Aorta (tissue), 5 donors: ENCODE measurements at regions of chr16 and their contacts with region 1.

Region 1: DNA sequence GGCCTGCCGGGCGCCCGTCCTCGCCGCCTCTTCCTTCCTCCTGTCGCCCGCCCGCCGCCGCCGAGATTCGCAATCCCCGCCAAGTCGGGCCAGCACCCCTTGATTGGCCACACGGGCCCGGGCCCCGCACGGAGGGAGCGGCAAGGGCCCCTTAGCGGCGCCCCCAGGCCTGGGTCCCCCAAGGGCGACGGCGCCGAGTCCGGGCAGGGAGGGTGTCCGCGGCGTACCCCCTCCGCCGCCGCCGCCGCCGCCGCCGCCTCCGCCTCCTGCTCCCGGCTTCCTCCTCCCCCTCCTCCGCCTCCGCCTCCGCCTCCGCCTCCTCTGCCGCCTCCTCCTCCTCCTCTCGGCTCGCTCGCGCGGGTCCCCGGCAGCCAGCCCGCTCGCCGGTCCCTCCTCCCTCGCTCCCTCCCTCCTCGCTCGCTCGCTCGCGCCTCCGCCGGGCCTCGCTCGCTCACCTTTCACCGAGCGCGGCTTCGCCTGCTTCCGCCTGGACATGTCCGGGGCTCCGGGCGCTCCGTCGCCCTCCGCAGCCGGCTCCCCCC is 561 bp downstream of the ZNF423 start:
- DNase-seq: peak; percentile 92 to 95
- ATAC-seq: peak; percentile 84
- H3K4me3 ChIP-seq: peak overlapping the region; percentile 87 to 92
- H3K27ac ChIP-seq: peak overlapping the region; percentile 30 to 71
- H3K4me1 ChIP-seq: no peaks in the 10 kb centered on the region
- H3K27me3 ChIP-seq: no peaks in the 10 kb centered on the region

Region 2: GRCh38 chr16:49484451-49484849 is 370.9 kb before region 1 on chr16:
- intact Hi-C with region 1: loop called (anchors 5 to 10 kb)
- DNase-seq: peak; percentile 70 to 88
- ATAC-seq: peak; percentile 95
- H3K4me3 ChIP-seq: no peak overlapping the region
- H3K27ac ChIP-seq: no peak overlapping the region
- H3K4me1 ChIP-seq: no peaks in the 10 kb centered on the region
- H3K27me3 ChIP-seq: no peaks in the 10 kb centered on the region

Region 3: GRCh38 chr16:49620158-49620868 is 235.0 kb before region 1 on chr16:
- intact Hi-C with region 1: loop called (anchors 10 kb)
- DNase-seq: peak; percentile 91 to 95
- ATAC-seq: peak; percentile 86
- H3K4me3 ChIP-seq: no peak overlapping the region
- H3K27ac ChIP-seq: peak overlapping the region; percentile 68 to 86
- H3K4me1 ChIP-seq: peaks cover 0 to 5% of the 10 kb centered on the region in 2 donors
- H3K27me3 ChIP-seq: no peaks in the 10 kb centered on the region

Region 4: GRCh38 chr16:49701789-49702494 is 153.4 kb before region 1 on chr16:
- intact Hi-C with region 1: loop called (anchors 5 kb)
- DNase-seq: peak; percentile 73 to 86
- ATAC-seq: peak; percentile 63
- H3K4me3 ChIP-seq: no peak overlapping the region
- H3K27ac ChIP-seq: no peak overlapping the region
- H3K4me1 ChIP-seq: peaks cover 0 to 3% of the 10 kb centered on the region in 2 donors
- H3K27me3 ChIP-seq: no peaks in the 10 kb centered on the region

Region 5: DNA sequence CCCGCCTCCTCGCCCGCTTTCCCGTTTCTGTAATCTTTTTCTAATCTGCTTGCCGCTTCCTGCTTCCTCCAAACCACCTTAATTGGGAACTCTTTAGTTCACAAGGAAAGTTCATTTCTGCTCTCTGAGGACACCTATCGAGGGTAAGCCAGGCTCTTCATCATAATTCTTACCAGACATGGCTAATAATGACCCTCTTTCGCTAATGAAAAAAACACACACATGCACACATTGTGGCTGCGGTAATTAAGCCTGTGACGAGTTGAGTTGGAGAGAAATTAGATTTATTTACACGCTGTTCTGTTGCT is 100.1 kb before region 1 on chr16:
- intact Hi-C with region 1: loop called in 1 of 2 experiments (anchors 2 kb)
- DNase-seq: no peak
- ATAC-seq: peak; percentile 47
- H3K4me3 ChIP-seq: peak overlapping the region in 1 of 2 donors; percentile 48
- H3K27ac ChIP-seq: no peak overlapping the region
- H3K4me1 ChIP-seq: no peaks in the 10 kb centered on the region
- H3K27me3 ChIP-seq: no peaks in the 10 kb centered on the region

Region 6: DNA sequence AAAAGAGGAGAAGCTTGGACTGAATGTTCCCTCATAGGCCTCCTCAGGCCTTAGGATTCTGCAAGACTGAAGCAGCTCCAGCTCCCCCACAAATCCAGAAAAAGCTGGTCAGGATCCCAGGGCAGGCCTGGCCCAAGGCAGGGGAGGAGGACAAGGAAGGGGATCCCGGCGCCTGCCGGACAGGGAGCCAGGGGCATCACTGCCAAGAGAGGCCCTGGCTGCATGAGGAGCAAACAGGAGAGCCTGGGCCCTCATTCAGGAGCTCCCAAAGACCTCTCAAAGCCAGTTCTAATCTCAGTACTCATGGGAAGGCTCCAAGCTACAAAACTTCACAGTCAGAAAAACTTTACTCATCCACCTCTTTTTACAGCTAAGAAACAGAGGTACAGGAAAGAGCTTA is 66.8 kb before region 1 on chr16:
- intact Hi-C with region 1: loop called in 1 of 2 experiments (anchors 2 kb)
- DNase-seq: peak in 1 of 2 donors; percentile 70
- ATAC-seq: peak; percentile 77
- H3K4me3 ChIP-seq: no peak overlapping the region
- H3K27ac ChIP-seq: peak overlapping the region; percentile 90 to 91
- H3K4me1 ChIP-seq: peaks cover 0 to 3% of the 10 kb centered on the region in 2 donors
- H3K27me3 ChIP-seq: no peaks in the 10 kb centered on the region

Region 7: DNA sequence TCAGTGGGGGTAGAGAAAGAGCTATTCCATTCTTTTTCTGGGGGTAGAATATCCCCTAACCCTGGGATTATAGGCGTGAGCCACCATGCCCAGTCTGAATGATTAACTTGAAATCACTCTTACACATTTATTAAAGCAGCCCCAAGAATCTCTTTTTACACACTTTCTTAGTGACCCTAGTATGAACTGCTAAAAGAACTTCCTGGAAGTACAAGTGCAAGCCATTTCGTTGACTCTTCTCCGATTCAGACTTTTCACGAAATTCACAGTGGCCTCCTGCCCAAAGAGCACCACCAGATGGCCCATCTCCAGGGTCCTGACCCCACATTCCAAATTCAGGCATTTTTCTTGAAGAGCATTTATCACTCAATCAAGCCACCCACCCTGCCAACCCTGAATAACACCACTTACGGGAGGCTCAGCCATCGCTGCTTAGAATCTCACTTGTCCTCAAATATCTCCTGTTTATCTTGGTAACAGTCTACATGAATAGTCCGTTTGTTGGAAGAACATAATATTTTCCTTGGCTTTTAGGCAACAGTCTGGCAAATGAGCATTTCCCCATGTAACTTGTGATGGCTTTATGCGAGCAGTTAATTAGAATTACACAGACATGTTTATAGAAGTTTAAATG is 27.4 kb before region 1 on chr16:
- intact Hi-C with region 1: loop called (anchors 2 to 5 kb)
- DNase-seq: peak in 1 of 2 donors; percentile 84
- ATAC-seq: peak; percentile 78
- H3K4me3 ChIP-seq: no peak overlapping the region
- H3K27ac ChIP-seq: peak overlapping the region in 1 of 2 donors; percentile 50
- H3K4me1 ChIP-seq: no peaks in the 10 kb centered on the region
- H3K27me3 ChIP-seq: no peaks in the 10 kb centered on the region

Region 8: DNA sequence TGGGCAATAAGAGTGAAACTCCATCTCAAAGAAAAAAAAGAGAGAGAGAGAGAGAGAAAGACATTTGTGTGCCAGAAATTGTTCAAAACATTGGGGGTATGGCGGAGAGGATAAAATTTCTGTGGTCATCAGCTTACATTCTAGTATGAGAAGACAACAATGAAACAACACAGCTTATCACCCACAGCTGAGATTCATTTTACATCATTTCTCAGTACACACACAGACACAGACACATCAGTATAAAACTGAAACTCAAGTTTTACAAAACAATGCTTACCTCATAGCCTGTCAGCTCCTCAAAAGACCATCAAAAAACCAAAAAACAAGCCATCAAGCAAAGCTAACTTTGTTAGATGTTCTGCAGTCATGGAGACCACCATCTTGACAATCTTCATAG is 138.2 kb after region 1 on chr16:
- intact Hi-C with region 1: no loop called
- DNase-seq: no peak
- ATAC-seq: no peak
- H3K4me3 ChIP-seq: no peak overlapping the region
- H3K27ac ChIP-seq: no peak overlapping the region
- H3K4me1 ChIP-seq: peaks cover 0 to 1% of the 10 kb centered on the region in 2 donors
- H3K27me3 ChIP-seq: peaks cover 0 to 2% of the 10 kb centered on the region in 2 donors

Region 9: GRCh38 chr16:50244504-50245416 is 389.4 kb after region 1 on chr16:
- intact Hi-C with region 1: no loop called
- DNase-seq: peak in 1 of 2 donors; percentile 70
- ATAC-seq: no peak
- H3K4me3 ChIP-seq: no peak overlapping the region
- H3K27ac ChIP-seq: no peak overlapping the region
- H3K4me1 ChIP-seq: no peaks in the 10 kb centered on the region
- H3K27me3 ChIP-seq: no peaks in the 10 kb centered on the region